Mammary epithelial cell (primary cell): ENCODE measurements at regions of chr4 and their contacts with region 1.

Region 1: GRCh38 chr4:44157721-44158256 is 290.8 kb downstream of the KCTD8 start:
- DNase-seq: no peak
- H3K4me3 ChIP-seq: no peak overlapping the region
- H3K27ac ChIP-seq: no peak overlapping the region
- H3K4me1 ChIP-seq: peaks cover 30% of the 10 kb centered on the region
- H3K27me3 ChIP-seq: no peaks in the 10 kb centered on the region
- CTCF ChIP-seq: no peak

Region 2: GRCh38 chr4:43525646-43526045 is 632.1 kb before region 1 on chr4:
- CTCF ChIA-PET with region 1: no interaction called
- dilution Hi-C with region 1: no loop called
- in situ Hi-C with region 1: no loop called
- intact Hi-C with region 1: no loop called
- DNase-seq: no peak
- H3K4me3 ChIP-seq: no peak overlapping the region
- H3K27ac ChIP-seq: no peak overlapping the region
- H3K4me1 ChIP-seq: no peaks in the 10 kb centered on the region
- H3K27me3 ChIP-seq: no peaks in the 10 kb centered on the region
- CTCF ChIP-seq: no peak

Region 3: GRCh38 chr4:43968011-43968410 is 189.8 kb before region 1 on chr4:
- CTCF ChIA-PET with region 1: no interaction called
- dilution Hi-C with region 1: no loop called
- in situ Hi-C with region 1: no loop called
- intact Hi-C with region 1: no loop called
- DNase-seq: no peak
- H3K4me3 ChIP-seq: no peak overlapping the region
- H3K27ac ChIP-seq: no peak overlapping the region
- H3K4me1 ChIP-seq: no peaks in the 10 kb centered on the region
- H3K27me3 ChIP-seq: no peaks in the 10 kb centered on the region
- CTCF ChIP-seq: no peak

Region 4: DNA sequence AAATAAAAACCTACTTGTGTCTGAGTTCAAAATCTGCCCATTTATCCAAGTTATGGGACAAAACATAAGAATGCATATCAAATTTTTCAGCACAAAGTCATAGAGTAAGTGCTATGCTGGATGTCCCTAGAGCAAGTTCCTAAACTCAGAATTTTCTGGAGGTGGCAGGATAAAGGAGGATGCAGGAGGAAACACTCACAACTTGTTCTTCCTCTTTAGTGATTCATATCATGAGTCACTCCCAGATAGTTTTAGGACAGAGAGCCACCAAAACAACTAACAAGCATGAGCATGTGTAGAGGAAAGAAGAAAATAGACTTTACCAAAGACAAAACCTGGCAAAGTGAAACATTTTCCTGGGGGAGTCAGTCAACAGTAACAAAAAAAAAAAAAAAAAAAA is 11.9 kb before region 1 on chr4:
- CTCF ChIA-PET with region 1: no interaction called
- dilution Hi-C with region 1: no loop called
- in situ Hi-C with region 1: no loop called
- intact Hi-C with region 1: loop called (anchors 1 kb)
- DNase-seq: peak; percentile 77
- H3K4me3 ChIP-seq: no peak overlapping the region
- H3K27ac ChIP-seq: peak overlapping the region; percentile 83
- H3K4me1 ChIP-seq: peaks cover 40% of the 10 kb centered on the region
- H3K27me3 ChIP-seq: no peaks in the 10 kb centered on the region
- CTCF ChIP-seq: no peak